ENCODE measurements at regions of chr4 and their contacts with region 1.

Region 1: GRCh38 chr4:52588097-52588782 is 70.9 kb downstream of the USP46 start:
- DNase-seq: no peak
- ATAC-seq: peak; percentile 47
- H3K4me3 Mint-ChIP-seq: no peak overlapping the region
- H3K27ac Mint-ChIP-seq: no peak overlapping the region
- H3K4me1 Mint-ChIP-seq: no peaks in the 10 kb centered on the region
- H3K27me3 Mint-ChIP-seq: peaks cover 3% of the 10 kb centered on the region
- CTCF ChIP-seq: no peak

Region 2: GRCh38 chr4:52576857-52577623 is 11.2 kb before region 1 on chr4:
- CTCF ChIA-PET with region 1: no interaction called
- POLR2A ChIA-PET with region 1: no interaction called
- intact Hi-C with region 1: no loop called
- DNase-seq: no peak
- ATAC-seq: no peak
- H3K4me3 Mint-ChIP-seq: no peak overlapping the region
- H3K27ac Mint-ChIP-seq: no peak overlapping the region
- H3K4me1 Mint-ChIP-seq: no peaks in the 10 kb centered on the region
- H3K27me3 Mint-ChIP-seq: peaks cover 4% of the 10 kb centered on the region
- CTCF ChIP-seq: no peak

Region 3: DNA sequence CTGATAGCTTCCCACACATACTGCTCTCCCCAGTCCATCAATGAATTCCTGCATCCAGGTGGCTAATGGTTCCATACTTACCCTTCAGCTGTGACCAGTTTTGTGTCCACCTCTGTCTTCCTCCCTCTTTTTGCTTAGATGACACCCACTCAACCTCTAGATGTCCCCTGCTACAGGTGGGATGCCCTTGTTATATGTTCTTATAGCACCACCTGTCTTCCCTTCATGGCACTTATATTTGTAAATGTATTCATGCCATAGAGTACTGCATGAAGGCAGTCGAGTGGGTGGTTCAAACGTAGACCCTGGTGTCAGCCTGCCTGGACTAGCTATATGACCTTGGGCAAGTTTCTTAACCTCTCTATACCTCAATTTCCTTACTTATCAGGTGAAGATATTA is 77.4 kb after region 1 on chr4:
- CTCF ChIA-PET with region 1: interaction called, 4 read pairs
- POLR2A ChIA-PET with region 1: no interaction called
- intact Hi-C with region 1: loop called (anchors 2 kb)
- DNase-seq: no peak
- ATAC-seq: peak; percentile 54
- H3K4me3 Mint-ChIP-seq: no peak overlapping the region
- H3K27ac Mint-ChIP-seq: no peak overlapping the region
- H3K4me1 Mint-ChIP-seq: peaks cover 2% of the 10 kb centered on the region
- H3K27me3 Mint-ChIP-seq: peaks cover 15% of the 10 kb centered on the region
- CTCF ChIP-seq: no peak

Measured in activated B cell treated with CpG ODN at 0.5 μM for 24 hours (primary cell).